Activated CD8-positive, alpha-beta T cell treated with anti-CD3 and anti-CD28 coated beads, Interleukin-2, amount 10 ng/mL, durations not matched to agents 7 days and 5 days (primary cell): ENCODE measurements at regions of chr12 and their contacts with region 1.

Region 1: GRCh38 chr12:121793838-121794533 is 498 bp upstream of the RHOF start:
- DNase-seq: peak; percentile 96
- ATAC-seq: peak; percentile 64
- H3K4me3 Mint-ChIP-seq: peak overlapping the region; percentile 94
- H3K27ac Mint-ChIP-seq: peak overlapping the region; percentile 95
- H3K4me1 Mint-ChIP-seq: peaks cover 60% of the 10 kb centered on the region
- H3K27me3 Mint-ChIP-seq: no peaks in the 10 kb centered on the region

Region 2: DNA sequence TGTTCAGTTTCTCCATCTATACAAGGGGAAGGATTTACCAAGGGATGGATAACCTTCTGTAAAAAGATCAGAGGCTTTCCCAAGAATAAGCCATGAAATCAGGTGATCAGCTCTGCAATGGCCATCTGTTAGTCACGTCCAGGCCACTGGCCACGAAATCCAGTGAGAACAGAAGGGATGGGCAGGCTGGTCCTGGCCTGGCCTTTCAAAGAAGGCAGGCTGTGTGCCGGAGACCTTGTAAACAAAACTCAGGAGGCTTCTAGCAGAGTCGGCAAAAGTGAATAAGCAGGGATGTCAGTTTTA is 325.5 kb before region 1 on chr12:
- CTCF ChIA-PET with region 1: no interaction called
- POLR2A ChIA-PET with region 1: no interaction called
- DNase-seq: no peak
- ATAC-seq: no peak
- H3K4me3 Mint-ChIP-seq: no peak overlapping the region
- H3K27ac Mint-ChIP-seq: no peak overlapping the region
- H3K4me1 Mint-ChIP-seq: peaks cover 28% of the 10 kb centered on the region
- H3K27me3 Mint-ChIP-seq: no peaks in the 10 kb centered on the region

Region 3: DNA sequence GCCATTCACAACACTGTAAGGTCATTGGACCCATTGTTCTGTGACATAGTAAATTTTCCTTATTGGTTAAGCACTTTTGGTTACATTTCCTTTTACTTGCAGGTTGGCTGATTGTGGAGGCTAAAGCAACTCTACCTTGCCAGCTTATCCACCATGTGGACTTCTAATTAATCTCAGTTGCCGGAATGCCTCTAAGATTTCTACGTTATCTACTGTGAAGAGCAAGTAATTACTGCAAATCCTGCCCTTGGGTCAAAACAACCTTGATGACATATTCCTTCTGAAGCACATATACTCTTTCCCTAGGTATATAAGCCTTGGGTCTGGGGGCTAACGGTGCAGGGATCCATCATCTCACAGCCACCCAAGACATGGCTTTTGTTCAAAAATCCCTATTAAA is 105.0 kb before region 1 on chr12:
- CTCF ChIA-PET with region 1: interaction called, 36 read pairs
- POLR2A ChIA-PET with region 1: interaction called, 3 read pairs
- DNase-seq: no peak
- ATAC-seq: no peak
- H3K4me3 Mint-ChIP-seq: no peak overlapping the region
- H3K27ac Mint-ChIP-seq: peak overlapping the region; percentile 34
- H3K4me1 Mint-ChIP-seq: peaks cover 14% of the 10 kb centered on the region
- H3K27me3 Mint-ChIP-seq: no peaks in the 10 kb centered on the region

Region 4: GRCh38 chr12:121719926-121720414 is 74.0 kb before region 1 on chr12:
- CTCF ChIA-PET with region 1: interaction called, 13 read pairs
- POLR2A ChIA-PET with region 1: no interaction called
- DNase-seq: no peak
- ATAC-seq: no peak
- H3K4me3 Mint-ChIP-seq: no peak overlapping the region
- H3K27ac Mint-ChIP-seq: no peak overlapping the region
- H3K4me1 Mint-ChIP-seq: peaks cover 10% of the 10 kb centered on the region
- H3K27me3 Mint-ChIP-seq: no peaks in the 10 kb centered on the region

Region 5: DNA sequence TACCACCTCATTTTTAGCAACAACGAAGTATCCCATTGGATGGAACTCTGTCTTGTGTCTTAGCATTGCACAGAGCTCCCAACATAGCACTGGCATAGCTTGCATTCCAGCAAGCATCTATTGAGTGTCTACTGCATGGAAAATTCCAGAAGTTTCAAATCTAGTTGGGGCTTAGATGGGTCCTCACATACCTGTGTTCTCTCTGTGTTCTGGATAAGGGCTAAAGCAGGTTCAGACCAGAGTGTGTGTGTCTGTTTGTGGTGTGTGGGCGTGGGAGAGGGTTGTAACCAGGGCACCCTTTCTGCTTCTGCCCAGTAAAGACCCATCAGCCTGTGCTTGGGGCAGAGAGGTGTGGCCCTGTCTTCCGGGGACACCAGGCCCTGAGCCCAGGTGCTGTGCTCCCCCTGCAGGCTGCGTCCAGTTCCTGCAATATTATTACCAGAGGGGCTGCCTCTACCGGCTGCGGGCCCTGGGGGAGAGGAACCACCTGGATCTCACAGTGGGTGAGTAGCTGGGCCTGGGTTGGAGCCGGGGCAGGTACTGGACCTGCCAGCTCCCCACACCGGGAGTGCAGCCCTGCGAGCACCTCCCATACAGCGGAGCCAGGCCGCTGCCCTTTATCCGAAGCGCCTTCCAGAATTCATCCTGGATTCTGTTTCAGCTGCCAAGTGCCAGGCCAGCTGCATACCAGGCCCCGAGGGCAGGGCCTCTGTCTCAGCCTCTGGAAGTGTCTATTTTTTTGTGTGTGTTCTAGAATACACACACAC is 20.8 kb before region 1 on chr12:
- CTCF ChIA-PET with region 1: interaction called, 581 read pairs
- POLR2A ChIA-PET with region 1: interaction called, 543 read pairs
- DNase-seq: peak; percentile 90
- ATAC-seq: peak; percentile 87
- H3K4me3 Mint-ChIP-seq: no peak overlapping the region
- H3K27ac Mint-ChIP-seq: peak overlapping the region; percentile 69
- H3K4me1 Mint-ChIP-seq: peaks cover 23% of the 10 kb centered on the region
- H3K27me3 Mint-ChIP-seq: no peaks in the 10 kb centered on the region

Region 6: DNA sequence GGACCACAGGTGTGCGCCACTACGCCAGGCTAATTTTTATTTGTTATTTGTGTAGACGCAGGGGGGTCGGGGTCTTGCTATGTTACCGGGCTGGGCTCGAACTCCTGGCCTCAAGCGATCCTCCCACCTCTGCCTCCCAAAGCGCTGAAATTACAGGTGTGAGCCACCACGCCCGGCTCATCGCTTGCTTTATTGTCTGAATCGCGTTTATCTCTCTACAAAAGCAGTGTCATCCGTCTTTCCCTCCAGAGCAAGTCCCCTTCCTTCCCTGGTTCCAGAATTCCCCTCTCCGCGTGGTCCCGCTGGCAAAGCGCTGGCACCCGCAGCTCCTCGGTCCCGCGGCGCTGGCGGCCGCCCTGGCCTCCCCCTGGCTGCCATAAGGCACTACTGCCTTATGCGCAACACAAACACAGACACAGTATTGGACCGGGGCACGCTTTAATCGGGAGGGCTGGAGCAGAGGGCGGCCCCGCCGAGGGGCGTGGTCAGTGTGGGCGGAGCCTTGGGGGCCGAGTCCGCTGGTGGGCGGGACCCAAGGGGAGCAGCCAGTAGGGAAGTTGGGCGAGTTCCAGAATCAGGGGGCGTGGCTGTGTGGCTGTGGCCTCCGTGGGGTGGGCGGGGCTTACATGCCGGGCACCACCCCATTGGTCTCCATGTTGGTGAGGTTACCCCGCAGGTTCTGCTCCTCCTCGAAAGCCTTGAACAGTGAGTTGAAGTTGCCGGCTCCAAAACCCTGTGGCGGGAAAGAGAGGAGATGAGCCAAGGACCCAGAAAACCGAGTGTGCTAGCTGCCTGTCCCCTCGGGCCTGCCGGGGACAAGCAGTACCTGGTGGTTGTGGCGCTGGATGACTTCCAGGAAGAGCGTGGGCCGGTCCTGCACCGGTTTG is 45.4 kb after region 1 on chr12:
- CTCF ChIA-PET with region 1: interaction called, 44 read pairs
- POLR2A ChIA-PET with region 1: interaction called, 4 read pairs
- DNase-seq: peak; percentile 99
- ATAC-seq: peak; percentile 99
- H3K4me3 Mint-ChIP-seq: peak overlapping the region; percentile 99
- H3K27ac Mint-ChIP-seq: peak overlapping the region; percentile 96
- H3K4me1 Mint-ChIP-seq: peaks cover 22% of the 10 kb centered on the region
- H3K27me3 Mint-ChIP-seq: no peaks in the 10 kb centered on the region